ENCODE measurements at regions of chr19 and their contacts with region 1.

Region 1: GRCh38 chr19:4873930-4874329 is 6.5 kb upstream of the PLIN3 start:
- DNase-seq: no peak
- H3K4me3 ChIP-seq: no peak overlapping the region
- H3K27ac ChIP-seq: no peak overlapping the region
- H3K4me1 ChIP-seq: peaks cover 0 to 18% (median 15%) of the 10 kb centered on the region in 4 donors
- H3K27me3 ChIP-seq: no peaks in the 10 kb centered on the region
- CTCF ChIP-seq: no peak
- EP300 ChIP-seq: no peak
- POLR2A ChIP-seq: no peak

Region 2: DNA sequence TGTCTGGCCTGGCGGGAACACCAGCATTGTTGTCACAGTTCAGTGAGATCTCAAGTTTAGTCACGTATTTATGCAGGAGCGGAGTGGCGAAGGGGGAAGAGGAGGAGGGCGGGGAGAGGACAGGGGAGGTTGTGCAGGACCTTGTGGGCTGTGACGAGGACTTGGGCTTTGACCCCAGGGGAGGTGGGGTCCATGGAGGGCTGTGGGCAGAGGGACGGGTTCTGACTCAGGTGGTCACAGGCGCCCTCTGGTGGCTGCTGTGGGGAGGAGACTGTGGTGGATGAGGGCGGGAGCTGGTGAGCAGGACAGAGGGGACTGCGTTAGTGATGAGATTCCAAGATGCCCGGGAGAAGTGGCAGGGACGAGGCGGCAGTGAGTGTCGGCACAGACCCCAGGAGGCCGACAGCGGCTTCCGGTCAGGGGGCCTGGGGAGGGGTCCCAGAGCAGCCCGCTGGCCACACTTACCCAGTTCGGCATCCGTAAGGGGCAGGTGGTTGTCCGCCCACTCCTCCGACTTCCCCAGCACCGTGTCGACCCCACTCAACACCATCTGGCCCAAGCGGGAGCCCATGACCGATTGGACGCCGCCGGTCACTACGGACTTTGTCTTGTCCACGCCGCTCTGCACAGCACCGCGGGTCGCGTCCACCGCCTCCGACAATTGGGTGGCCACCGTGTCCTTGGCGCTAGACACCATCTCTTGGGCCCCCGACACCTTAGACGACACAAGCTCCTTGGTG is 22.2 kb before region 1 on chr19:
- intact Hi-C with region 1: no loop called
- DNase-seq: peak; percentile 87
- H3K4me3 ChIP-seq: no peak overlapping the region
- H3K27ac ChIP-seq: no peak overlapping the region
- H3K4me1 ChIP-seq: no peaks in the 10 kb centered on the region
- H3K27me3 ChIP-seq: no peaks in the 10 kb centered on the region
- CTCF ChIP-seq: peak; percentile 83 to 91 (median 90)
- EP300 ChIP-seq: no peak
- POLR2A ChIP-seq: no peak

Region 3: GRCh38 chr19:4909897-4910593 is 36.1 kb after region 1 on chr19:
- intact Hi-C with region 1: loop called (anchors 1 kb)
- DNase-seq: peak; percentile 94
- H3K4me3 ChIP-seq: peak overlapping the region; percentile 49 to 72 (median 66)
- H3K27ac ChIP-seq: no peak overlapping the region
- H3K4me1 ChIP-seq: peaks cover 0 to 30% (median 28%) of the 10 kb centered on the region in 4 donors
- H3K27me3 ChIP-seq: peaks cover 6 to 21% (median 12%) of the 10 kb centered on the region in 3 donors
- CTCF ChIP-seq: no peak
- EP300 ChIP-seq: no peak
- POLR2A ChIP-seq: no peak

Measured in sigmoid colon (tissue), 7 donors.